Activated CD4-positive, alpha-beta T cell treated with anti-CD3 and anti-CD28 coated beads for 36 hours (primary cell): ENCODE measurements at regions of chr3 and their contacts with region 1.

Region 1: DNA sequence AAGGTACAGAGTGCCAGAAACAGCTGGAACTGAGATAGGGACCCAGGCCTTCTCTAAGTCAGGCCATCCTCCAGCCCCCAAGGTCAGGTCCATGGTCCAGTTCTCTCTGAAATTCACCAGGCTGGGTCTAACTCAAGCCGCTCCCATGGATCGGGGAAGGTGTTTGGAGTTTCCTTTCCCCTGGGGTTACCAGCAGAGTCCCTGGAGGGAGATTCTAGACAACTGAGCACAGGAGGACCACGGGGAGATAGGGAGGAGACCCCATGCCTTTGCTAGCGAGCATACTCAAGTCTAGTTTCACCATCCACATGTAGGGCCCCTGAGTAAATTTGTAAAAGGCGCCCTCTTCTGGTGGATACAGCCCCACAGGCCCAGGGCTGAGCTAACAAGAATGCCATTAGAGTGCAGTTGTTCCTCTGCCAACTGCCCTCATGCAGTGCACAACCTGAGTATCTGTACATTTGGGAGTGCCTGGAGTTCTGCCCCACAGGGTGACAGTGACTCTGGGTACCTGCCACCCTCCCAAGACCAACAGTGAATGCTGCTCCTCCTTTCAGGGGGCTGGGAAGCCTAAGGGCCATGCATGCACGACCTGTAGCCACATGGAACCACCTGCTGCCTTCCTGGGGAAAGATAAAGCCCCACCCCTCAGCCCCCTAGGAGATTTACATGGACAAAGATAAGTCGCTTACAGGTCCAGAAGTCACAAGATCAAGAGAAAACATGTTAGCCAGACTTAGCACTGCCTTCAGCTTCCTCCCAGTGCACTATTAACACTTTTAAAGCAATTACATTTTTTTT is 89.0 kb downstream of the IQSEC1 start:
- DNase-seq: peak; percentile 78
- ATAC-seq: peak; percentile 90
- H3K4me3 Mint-ChIP-seq: no peak overlapping the region
- H3K27ac Mint-ChIP-seq: peak overlapping the region; percentile 57
- H3K4me1 Mint-ChIP-seq: peaks cover 30% of the 10 kb centered on the region
- H3K27me3 Mint-ChIP-seq: no peaks in the 10 kb centered on the region

Region 2: GRCh38 chr3:12868039-12869034 is 115.9 kb before region 1 on chr3:
- CTCF ChIA-PET with region 1: interaction called, 5 read pairs
- POLR2A ChIA-PET with region 1: no interaction called
- intact Hi-C with region 1: loop called (anchors 1 kb)
- DNase-seq: peak; percentile 79
- ATAC-seq: peak; percentile 88
- H3K4me3 Mint-ChIP-seq: peak overlapping the region; percentile 72
- H3K27ac Mint-ChIP-seq: peak overlapping the region; percentile 71
- H3K4me1 Mint-ChIP-seq: peaks cover 9% of the 10 kb centered on the region
- H3K27me3 Mint-ChIP-seq: peaks cover 8% of the 10 kb centered on the region

Region 3: GRCh38 chr3:12948891-12949711 is 35.1 kb before region 1 on chr3:
- CTCF ChIA-PET with region 1: interaction called, 3 read pairs
- POLR2A ChIA-PET with region 1: no interaction called
- intact Hi-C with region 1: loop called (anchors 1 to 5 kb)
- DNase-seq: peak; percentile 78
- ATAC-seq: peak; percentile 89
- H3K4me3 Mint-ChIP-seq: peak overlapping the region; percentile 40
- H3K27ac Mint-ChIP-seq: peak overlapping the region; percentile 90
- H3K4me1 Mint-ChIP-seq: peaks cover 44% of the 10 kb centered on the region
- H3K27me3 Mint-ChIP-seq: no peaks in the 10 kb centered on the region

Region 4: GRCh38 chr3:12973827-12974226 is 10.4 kb before region 1 on chr3:
- CTCF ChIA-PET with region 1: interaction called, 23 read pairs
- POLR2A ChIA-PET with region 1: no interaction called
- intact Hi-C with region 1: no loop called
- DNase-seq: no peak
- ATAC-seq: no peak
- H3K4me3 Mint-ChIP-seq: no peak overlapping the region
- H3K27ac Mint-ChIP-seq: no peak overlapping the region
- H3K4me1 Mint-ChIP-seq: peaks cover 6% of the 10 kb centered on the region
- H3K27me3 Mint-ChIP-seq: no peaks in the 10 kb centered on the region

Region 5: DNA sequence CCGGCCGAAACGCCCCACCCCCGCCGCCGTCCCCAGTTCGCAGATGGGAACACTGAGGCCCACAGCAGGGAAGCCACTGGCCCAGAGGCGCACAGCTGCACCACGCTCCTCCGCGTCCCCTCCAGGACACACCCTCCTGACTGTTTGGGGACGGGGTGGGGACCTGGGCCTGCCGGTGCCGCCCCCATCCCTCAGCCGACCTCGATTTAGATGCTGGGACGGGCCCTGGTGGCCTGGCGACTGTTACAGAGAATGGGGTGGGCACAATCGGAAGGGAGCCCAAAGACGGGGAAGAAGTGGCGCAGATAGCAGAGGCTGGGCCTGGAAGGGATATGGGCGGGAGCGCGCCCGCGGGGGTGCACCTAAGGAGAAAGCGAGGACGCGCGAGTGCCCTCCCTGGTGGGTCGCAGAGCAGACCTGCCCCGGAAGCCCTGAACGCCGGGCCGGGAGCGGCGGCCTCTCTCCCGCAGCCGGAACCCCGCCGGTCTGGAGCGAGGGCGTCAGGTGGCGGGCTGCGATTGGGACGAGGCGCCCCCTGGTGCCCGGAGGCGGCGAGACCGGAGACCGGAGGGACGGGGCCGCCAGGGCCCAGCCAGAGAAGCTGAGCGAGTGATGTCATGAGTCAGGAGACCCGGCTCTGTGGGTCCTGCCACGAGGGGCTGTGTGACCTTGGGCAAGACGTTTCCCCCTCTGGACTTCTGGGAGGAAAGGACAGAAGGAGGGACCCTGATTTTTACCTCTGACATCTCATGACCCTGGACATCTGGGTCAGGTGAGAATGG is 10.6 kb after region 1 on chr3:
- CTCF ChIA-PET with region 1: interaction called, 28 read pairs
- POLR2A ChIA-PET with region 1: no interaction called
- intact Hi-C with region 1: no loop called
- DNase-seq: peak; percentile 93
- ATAC-seq: peak; percentile 91
- H3K4me3 Mint-ChIP-seq: peak overlapping the region; percentile 90
- H3K27ac Mint-ChIP-seq: peak overlapping the region; percentile 81
- H3K4me1 Mint-ChIP-seq: peaks cover 56% of the 10 kb centered on the region
- H3K27me3 Mint-ChIP-seq: no peaks in the 10 kb centered on the region